MCF 10A (cell line): ENCODE measurements at regions of chr3 and their contacts with region 1.

Region 1: DNA sequence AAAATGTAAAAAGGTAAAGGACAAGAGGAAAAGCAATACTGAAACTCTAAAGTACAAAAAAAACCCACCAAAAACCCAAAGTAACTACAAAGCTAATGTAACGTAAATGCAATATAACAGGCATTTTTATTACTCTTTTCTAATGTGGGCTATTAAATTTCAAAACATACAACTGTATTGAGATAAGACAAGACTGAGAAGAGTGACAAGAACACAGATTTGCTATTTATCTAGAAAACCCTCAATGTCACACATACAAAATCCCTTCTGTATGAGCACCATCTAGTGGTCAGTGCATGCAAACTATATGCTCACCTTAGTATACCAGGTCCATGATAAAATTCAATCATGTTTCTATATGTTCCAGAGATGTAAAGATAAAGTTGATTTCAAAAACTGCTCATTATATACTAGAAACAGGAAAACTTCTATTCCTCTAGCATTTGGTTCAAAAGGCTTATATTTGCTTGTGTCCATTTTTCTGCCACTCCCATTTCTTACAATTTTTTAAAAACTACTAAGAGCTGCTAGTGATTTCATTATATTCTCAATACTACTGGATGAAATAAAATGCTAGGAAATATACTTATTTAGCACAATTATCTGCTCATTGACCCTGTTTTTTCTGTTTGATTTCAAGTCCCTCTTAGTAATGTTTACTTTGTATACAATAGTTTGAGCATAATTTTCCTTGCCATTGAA is 111.4 kb downstream of the DLG1 start:
- DNase-seq: peak; percentile 77
- H3K4me3 Mint-ChIP-seq: no peak overlapping the region
- H3K27ac Mint-ChIP-seq: no peak overlapping the region
- H3K4me1 Mint-ChIP-seq: peaks cover 11% of the 10 kb centered on the region
- H3K27me3 Mint-ChIP-seq: no peaks in the 10 kb centered on the region
- CTCF ChIP-seq: peak; percentile 64

Region 2: DNA sequence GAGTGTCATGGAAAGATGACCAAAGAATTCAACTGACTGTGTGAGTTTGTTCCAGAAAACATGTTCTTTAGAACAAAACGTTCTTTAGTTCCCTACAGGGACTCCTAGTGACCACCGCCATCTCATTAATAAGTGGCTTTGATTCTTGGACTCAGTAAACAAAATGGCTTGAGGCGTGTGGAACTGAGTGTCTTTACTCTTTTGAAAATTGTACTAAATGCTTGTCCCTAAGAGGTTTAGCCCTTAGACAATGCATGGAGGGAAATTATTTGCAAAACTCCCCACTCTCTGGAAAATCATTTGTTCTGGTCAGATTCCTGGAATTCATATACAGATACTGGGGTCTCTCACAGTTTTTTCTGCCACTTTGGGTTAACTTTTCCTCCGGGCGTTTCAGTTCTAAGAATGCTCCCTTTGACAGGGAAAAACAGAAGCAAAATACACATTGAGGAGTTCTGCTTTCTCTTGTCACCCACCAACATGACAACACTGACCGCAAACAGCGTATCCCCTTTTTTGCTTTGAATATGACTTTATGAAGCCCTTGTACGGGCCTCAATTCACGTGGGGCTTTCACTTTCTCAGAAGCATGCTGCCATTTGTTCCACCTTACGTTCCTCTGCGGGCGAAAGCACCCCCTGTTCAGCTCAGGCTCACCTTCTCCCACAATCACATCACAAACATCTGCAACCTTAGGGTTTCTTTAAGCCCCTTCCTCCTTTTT is 562.8 kb before region 1 on chr3:
- CTCF ChIA-PET with region 1: no interaction called
- POLR2A ChIA-PET with region 1: no interaction called
- intact Hi-C with region 1: no loop called
- DNase-seq: no peak
- H3K4me3 Mint-ChIP-seq: no peak overlapping the region
- H3K27ac Mint-ChIP-seq: no peak overlapping the region
- H3K4me1 Mint-ChIP-seq: no peaks in the 10 kb centered on the region
- H3K27me3 Mint-ChIP-seq: no peaks in the 10 kb centered on the region
- CTCF ChIP-seq: no peak

Region 3: GRCh38 chr3:197083486-197083885 is 103.6 kb before region 1 on chr3:
- CTCF ChIA-PET with region 1: interaction called, 4 read pairs
- POLR2A ChIA-PET with region 1: no interaction called
- intact Hi-C with region 1: loop called (anchors 1 kb)
- DNase-seq: peak; percentile 71
- H3K4me3 Mint-ChIP-seq: no peak overlapping the region
- H3K27ac Mint-ChIP-seq: peak overlapping the region; percentile 87
- H3K4me1 Mint-ChIP-seq: peaks cover 15% of the 10 kb centered on the region
- H3K27me3 Mint-ChIP-seq: no peaks in the 10 kb centered on the region
- CTCF ChIP-seq: no peak

Region 4: DNA sequence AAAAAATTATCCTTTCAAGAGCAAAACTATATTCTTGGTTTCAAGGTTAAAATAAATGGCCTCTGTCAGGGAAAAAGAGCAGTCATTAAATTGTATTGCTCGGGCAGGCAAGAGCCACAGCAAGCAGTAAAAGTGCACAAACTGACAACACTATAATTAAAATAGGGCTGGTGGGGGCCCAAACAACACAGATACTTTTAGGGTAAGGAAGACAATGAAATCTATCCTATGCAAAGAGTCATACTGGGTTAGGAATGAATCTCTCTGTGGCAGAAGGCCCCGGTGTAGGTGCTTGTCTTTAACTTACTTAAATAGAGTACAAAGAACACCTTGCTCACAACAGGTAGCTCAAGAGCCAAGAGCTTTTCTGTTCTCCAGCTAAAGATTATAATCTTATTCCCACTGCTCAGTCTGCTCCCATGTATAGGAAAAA is 16.7 kb after region 1 on chr3:
- CTCF ChIA-PET with region 1: interaction called, 15 read pairs
- POLR2A ChIA-PET with region 1: interaction called, 5 read pairs
- intact Hi-C with region 1: no loop called
- DNase-seq: no peak
- H3K4me3 Mint-ChIP-seq: no peak overlapping the region
- H3K27ac Mint-ChIP-seq: no peak overlapping the region
- H3K4me1 Mint-ChIP-seq: peaks cover 16% of the 10 kb centered on the region
- H3K27me3 Mint-ChIP-seq: no peaks in the 10 kb centered on the region
- CTCF ChIP-seq: no peak